ENCODE measurements at regions of chr10 and their contacts with region 1.

Region 1: GRCh38 chr10:35195361-35196306 is 69.0 kb downstream of the CREM start:
- DNase-seq: peak; percentile 89
- H3K4me3 Mint-ChIP-seq: peak overlapping the region; percentile 91
- H3K27ac Mint-ChIP-seq: peak overlapping the region; percentile 100
- H3K4me1 Mint-ChIP-seq: peaks cover 44% of the 10 kb centered on the region
- H3K27me3 Mint-ChIP-seq: no peaks in the 10 kb centered on the region

Region 2: GRCh38 chr10:35090162-35090954 is 105.3 kb before region 1 on chr10 and contains the start of gene CUL2:
- CTCF ChIA-PET with region 1: interaction called, 3 read pairs
- POLR2A ChIA-PET with region 1: interaction called, 16 read pairs
- intact Hi-C with region 1: loop called (anchors 1 kb)
- DNase-seq: peak; percentile 94
- H3K4me3 Mint-ChIP-seq: peak within 1 kb of the TSS; percentile 95
- H3K27ac Mint-ChIP-seq: peak within 1 kb of the TSS; percentile 94
- H3K4me1 Mint-ChIP-seq: peaks cover 50% of the 10 kb centered on the region
- H3K27me3 Mint-ChIP-seq: no peaks in the 10 kb centered on the region
- total RNA-seq, gene CUL2: 39.7 to 43.3 TPM

Region 3: DNA sequence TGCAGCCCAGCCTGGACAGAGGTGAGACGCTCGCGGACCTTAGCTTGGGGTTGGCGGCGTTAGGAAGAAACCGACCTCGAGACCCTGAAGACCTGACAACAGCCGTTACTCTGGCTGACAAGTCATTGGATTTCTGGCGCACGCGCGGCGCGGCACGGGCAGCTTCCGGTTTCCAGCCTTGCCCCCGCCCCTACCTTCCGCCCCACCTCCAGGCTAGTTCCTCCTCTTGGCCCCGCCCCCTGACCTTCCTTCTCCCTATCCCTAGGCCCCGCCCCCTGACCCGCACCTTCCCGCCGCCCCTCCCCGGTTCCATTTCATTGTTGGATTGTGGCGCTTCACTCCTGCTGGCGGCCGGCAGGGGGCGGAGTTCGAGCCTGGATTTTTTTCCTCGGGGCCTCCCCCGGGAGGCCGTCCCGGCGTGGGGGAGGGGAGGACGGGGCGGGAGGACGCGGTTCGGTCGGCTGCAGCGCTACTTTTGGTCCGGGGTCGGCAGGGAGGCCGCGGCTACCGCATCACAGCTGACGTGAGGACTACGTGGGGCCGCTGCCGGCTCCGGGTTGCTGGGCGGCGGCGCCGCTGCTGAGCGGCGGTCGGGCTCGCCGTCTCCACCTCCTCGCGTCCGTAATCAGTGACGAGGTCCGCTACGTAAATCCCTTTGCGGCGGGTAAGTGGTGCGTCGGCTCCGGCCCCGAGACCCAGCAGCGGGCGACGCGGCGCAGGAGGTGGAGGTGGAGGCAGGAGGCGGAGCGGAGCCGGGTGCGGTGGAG is 68.9 kb before region 1 on chr10 and contains the start of gene CREM:
- CTCF ChIA-PET with region 1: interaction called, 223 read pairs
- POLR2A ChIA-PET with region 1: interaction called, 154 read pairs
- intact Hi-C with region 1: loop called (anchors 1 kb)
- DNase-seq: peak; percentile 100
- H3K4me3 Mint-ChIP-seq: peak within 1 kb of the TSS; percentile 86
- H3K27ac Mint-ChIP-seq: peak within 1 kb of the TSS; percentile 95
- H3K4me1 Mint-ChIP-seq: peaks cover 53% of the 10 kb centered on the region
- H3K27me3 Mint-ChIP-seq: no peaks in the 10 kb centered on the region
- total RNA-seq, gene CREM: 160 to 164 TPM

Region 4: DNA sequence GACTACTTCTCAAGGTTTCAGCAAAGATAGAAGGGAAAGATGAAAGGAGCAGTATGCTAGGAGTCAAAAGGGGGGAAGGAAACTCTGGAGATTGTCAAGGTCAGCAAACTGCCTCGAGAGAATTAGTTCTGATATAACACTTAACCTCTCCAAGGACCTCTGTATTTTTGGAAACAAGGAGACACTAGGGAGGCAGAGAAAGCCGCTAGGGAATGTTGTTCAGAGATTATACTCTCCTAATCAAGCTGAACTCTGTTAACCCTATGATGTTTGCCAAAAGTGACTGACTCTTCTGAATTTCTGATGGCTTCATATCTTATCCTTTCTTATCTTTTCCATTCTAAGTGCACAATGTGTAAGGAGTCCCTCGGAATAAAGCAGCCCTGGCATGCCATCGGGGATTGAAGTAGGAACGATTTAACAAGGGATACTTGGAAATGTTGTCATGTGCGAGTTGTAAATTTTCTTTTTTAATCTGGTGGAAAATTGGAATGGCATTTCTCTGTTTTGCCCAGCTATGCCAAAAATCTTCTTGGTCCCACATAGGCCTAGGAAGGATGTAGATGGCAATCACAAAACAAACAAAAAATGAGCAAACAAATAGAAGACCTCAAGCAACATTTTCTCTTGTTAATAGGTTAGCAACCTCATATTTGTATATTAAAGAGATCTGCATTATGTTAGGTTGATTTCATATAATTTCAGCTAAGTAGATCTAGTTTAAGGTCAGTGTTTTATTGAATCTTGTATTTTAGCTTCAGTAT is 41.7 kb before region 1 on chr10:
- CTCF ChIA-PET with region 1: interaction called, 53 read pairs
- POLR2A ChIA-PET with region 1: interaction called, 39 read pairs
- intact Hi-C with region 1: loop called (anchors 1 kb)
- DNase-seq: no peak
- H3K4me3 Mint-ChIP-seq: no peak overlapping the region
- H3K27ac Mint-ChIP-seq: no peak overlapping the region
- H3K4me1 Mint-ChIP-seq: peaks cover 48% of the 10 kb centered on the region
- H3K27me3 Mint-ChIP-seq: no peaks in the 10 kb centered on the region

Region 5: DNA sequence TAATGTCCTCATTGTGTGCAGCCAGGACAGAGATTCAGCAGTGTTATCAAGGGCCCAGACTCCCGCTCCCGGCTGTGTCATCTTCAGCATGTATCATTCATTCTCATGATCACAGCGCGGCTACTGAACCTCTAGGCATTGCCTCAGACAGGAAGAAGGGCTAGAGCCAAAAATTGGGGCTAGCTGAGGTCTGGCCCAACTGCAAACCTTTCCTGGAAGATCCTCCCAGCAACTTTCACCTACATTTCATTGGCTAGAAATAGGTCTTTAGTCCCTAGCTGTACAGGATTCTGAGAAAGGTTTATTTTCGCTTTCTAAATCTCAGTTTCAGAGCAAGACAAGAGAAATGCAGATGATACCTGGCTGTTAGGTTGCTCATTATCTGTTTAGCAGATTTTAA is 12.9 kb after region 1 on chr10:
- CTCF ChIA-PET with region 1: interaction called, 56 read pairs
- POLR2A ChIA-PET with region 1: interaction called, 19 read pairs
- intact Hi-C with region 1: loop called (anchors 1 kb)
- DNase-seq: peak; percentile 79
- H3K4me3 Mint-ChIP-seq: peak overlapping the region; percentile 33
- H3K27ac Mint-ChIP-seq: peak overlapping the region; percentile 80
- H3K4me1 Mint-ChIP-seq: peaks cover 24% of the 10 kb centered on the region
- H3K27me3 Mint-ChIP-seq: no peaks in the 10 kb centered on the region

Region 6: GRCh38 chr10:35271086-35271858 is 75.6 kb after region 1 on chr10:
- CTCF ChIA-PET with region 1: no interaction called
- POLR2A ChIA-PET with region 1: no interaction called
- intact Hi-C with region 1: no loop called
- DNase-seq: no peak
- H3K4me3 Mint-ChIP-seq: no peak overlapping the region
- H3K27ac Mint-ChIP-seq: no peak overlapping the region
- H3K4me1 Mint-ChIP-seq: peaks cover 9% of the 10 kb centered on the region
- H3K27me3 Mint-ChIP-seq: peaks cover 2% of the 10 kb centered on the region

Region 7: DNA sequence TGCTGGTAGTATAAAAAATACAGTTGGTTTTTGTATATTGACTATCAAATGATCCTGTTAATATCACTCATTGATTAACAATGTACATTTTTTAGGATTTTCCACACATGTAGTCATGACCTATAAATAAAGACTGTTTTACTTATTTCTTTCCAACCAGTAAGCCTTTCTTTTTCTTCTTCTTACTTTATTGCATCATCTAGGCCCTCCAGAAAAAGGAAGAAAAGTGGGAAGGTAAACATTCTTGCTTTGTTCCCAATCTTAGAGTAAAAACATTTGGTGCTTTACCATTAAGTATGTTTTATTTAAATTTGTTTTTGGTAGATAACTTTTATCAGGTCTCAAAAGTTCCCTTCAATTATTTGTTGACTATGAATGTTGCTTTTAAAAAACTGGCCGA is 93.6 kb after region 1 on chr10:
- CTCF ChIA-PET with region 1: no interaction called
- POLR2A ChIA-PET with region 1: no interaction called
- intact Hi-C with region 1: no loop called
- DNase-seq: no peak
- H3K4me3 Mint-ChIP-seq: no peak overlapping the region
- H3K27ac Mint-ChIP-seq: no peak overlapping the region
- H3K4me1 Mint-ChIP-seq: no peaks in the 10 kb centered on the region
- H3K27me3 Mint-ChIP-seq: no peaks in the 10 kb centered on the region

Region 8: DNA sequence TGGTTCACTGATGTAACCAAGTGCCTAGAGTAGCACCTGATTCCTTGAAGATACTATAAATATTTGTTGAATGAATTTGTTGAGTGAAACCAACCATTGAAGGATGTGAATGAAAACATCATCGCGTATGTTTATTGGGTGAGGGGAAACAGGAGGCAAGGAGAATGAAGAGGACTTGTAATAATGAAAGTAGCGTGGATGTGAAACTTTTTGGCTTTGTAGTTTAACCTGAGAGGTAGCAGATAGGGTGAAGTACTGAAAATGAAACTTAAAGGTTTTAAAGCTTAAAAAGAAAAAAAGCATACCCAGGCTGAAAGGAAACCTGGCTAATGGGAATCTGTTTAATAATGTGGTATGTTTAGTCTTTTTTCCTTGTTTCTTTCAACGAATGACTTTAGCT is 145.9 kb after region 1 on chr10:
- CTCF ChIA-PET with region 1: interaction called, 4 read pairs
- POLR2A ChIA-PET with region 1: interaction called, 5 read pairs
- intact Hi-C with region 1: loop called (anchors 1 kb)
- DNase-seq: no peak
- H3K4me3 Mint-ChIP-seq: no peak overlapping the region
- H3K27ac Mint-ChIP-seq: peak overlapping the region; percentile 10
- H3K4me1 Mint-ChIP-seq: peaks cover 71% of the 10 kb centered on the region
- H3K27me3 Mint-ChIP-seq: no peaks in the 10 kb centered on the region

Measured in activated CD4-positive, alpha-beta memory T cell treated with anti-CD3 and anti-CD28 coated beads for 36 hours (primary cell).